Activated CD4-positive, alpha-beta T cell treated with anti-CD3 and anti-CD28 coated beads for 36 hours (primary cell): ENCODE measurements at regions of chr17 and their contacts with region 1.

Region 1: GRCh38 chr17:17206124-17206912 is at the start of gene PLD6:
- DNase-seq: peak; percentile 96
- ATAC-seq: peak; percentile 77
- H3K4me3 Mint-ChIP-seq: peak within 1 kb of the TSS; percentile 90
- H3K27ac Mint-ChIP-seq: peak within 1 kb of the TSS; percentile 97
- H3K4me1 Mint-ChIP-seq: peaks cover 25% of the 10 kb centered on the region
- H3K27me3 Mint-ChIP-seq: no peaks in the 10 kb centered on the region
- total RNA-seq, gene PLD6: 8.3 to 9.9 TPM

Region 2: GRCh38 chr17:17001874-17002520 is 204.3 kb before region 1 on chr17:
- CTCF ChIA-PET with region 1: no interaction called
- POLR2A ChIA-PET with region 1: no interaction called
- intact Hi-C with region 1: loop called in 1 of 2 experiments (anchors 1 kb)
- DNase-seq: peak; percentile 88
- ATAC-seq: peak; percentile 98
- H3K4me3 Mint-ChIP-seq: no peak overlapping the region
- H3K27ac Mint-ChIP-seq: no peak overlapping the region
- H3K4me1 Mint-ChIP-seq: no peaks in the 10 kb centered on the region
- H3K27me3 Mint-ChIP-seq: no peaks in the 10 kb centered on the region

Region 3: GRCh38 chr17:17119533-17119932 is 86.8 kb before region 1 on chr17:
- CTCF ChIA-PET with region 1: no interaction called
- POLR2A ChIA-PET with region 1: no interaction called
- intact Hi-C with region 1: loop called in 1 of 2 experiments (anchors 1 kb)
- DNase-seq: peak; percentile 82
- ATAC-seq: peak; percentile 92
- H3K4me3 Mint-ChIP-seq: no peak overlapping the region
- H3K27ac Mint-ChIP-seq: peak overlapping the region; percentile 87
- H3K4me1 Mint-ChIP-seq: peaks cover 80% of the 10 kb centered on the region
- H3K27me3 Mint-ChIP-seq: no peaks in the 10 kb centered on the region

Region 4: DNA sequence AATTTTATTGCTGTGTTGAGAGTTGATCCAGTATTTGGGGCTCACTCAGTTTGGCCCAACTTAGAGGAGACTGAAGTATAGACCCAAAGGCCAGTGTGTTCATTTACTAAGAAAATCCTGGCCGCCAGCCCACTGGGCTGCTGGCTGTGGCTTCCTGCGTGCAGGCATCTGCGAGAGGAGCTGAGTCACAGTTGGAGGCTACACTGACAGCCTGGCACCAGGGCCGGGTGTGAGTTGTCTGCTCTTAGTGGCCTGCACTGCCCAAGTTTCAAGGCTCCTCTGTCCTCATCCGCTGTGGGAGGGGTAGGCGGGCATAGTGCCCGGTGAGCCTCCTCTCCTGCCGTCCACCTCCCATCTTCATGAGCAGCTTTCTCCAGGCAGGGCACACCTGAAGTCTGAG is 54.4 kb before region 1 on chr17:
- CTCF ChIA-PET with region 1: no interaction called
- POLR2A ChIA-PET with region 1: no interaction called
- intact Hi-C with region 1: loop called (anchors 2 to 5 kb)
- DNase-seq: peak; percentile 69
- ATAC-seq: peak; percentile 48
- H3K4me3 Mint-ChIP-seq: no peak overlapping the region
- H3K27ac Mint-ChIP-seq: peak overlapping the region; percentile 75
- H3K4me1 Mint-ChIP-seq: peaks cover 62% of the 10 kb centered on the region
- H3K27me3 Mint-ChIP-seq: no peaks in the 10 kb centered on the region

Region 5: GRCh38 chr17:17171991-17172939 is 34.1 kb before region 1 on chr17:
- CTCF ChIA-PET with region 1: no interaction called
- POLR2A ChIA-PET with region 1: no interaction called
- intact Hi-C with region 1: no loop called
- DNase-seq: no peak
- ATAC-seq: no peak
- H3K4me3 Mint-ChIP-seq: no peak overlapping the region
- H3K27ac Mint-ChIP-seq: no peak overlapping the region
- H3K4me1 Mint-ChIP-seq: peaks cover 64% of the 10 kb centered on the region
- H3K27me3 Mint-ChIP-seq: no peaks in the 10 kb centered on the region

Region 6: DNA sequence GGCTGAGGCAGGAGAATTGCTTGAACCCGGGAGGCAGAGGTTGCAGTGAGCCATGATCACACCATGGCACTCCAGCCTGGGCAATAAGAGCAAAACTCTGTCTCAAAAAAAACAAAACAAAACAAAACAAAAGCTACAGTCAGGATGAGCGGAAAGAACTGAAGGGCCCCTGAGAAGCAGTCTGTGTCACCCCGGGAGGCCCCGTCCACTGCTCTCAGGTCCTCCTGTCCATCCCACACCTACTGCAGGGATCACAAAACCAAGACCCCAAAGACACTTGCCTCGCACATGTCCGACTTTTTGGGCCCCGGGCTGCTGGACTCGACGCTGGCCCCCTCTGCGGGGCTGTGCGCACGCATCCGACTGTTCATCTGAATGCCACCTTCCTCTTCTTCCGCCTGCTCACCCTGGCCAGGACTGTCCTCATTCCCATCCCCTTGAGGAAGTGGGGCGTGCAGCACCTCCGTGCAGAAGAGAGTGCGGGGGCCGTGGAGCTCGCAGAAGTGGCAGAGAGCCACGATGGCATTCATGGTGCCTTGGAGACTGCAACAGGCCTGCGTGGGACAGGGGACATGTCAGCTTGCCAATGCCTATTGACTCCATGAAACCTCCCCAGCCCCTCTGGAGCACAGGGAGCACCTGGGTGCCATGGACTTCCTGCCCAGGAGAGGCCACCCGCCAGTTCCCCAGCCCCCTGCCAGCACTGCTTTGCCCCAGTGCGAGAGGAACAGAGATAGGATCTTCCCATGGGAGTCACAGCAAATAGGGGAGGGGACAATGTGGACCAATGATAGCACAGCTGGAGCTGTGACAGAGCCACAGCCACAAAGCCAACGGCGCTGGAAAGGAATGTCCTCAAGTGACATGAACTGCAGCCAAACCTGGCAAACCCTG is 21.5 kb after region 1 on chr17:
- CTCF ChIA-PET with region 1: no interaction called
- POLR2A ChIA-PET with region 1: no interaction called
- intact Hi-C with region 1: no loop called
- DNase-seq: no peak
- ATAC-seq: no peak
- H3K4me3 Mint-ChIP-seq: no peak overlapping the region
- H3K27ac Mint-ChIP-seq: no peak overlapping the region
- H3K4me1 Mint-ChIP-seq: no peaks in the 10 kb centered on the region
- H3K27me3 Mint-ChIP-seq: no peaks in the 10 kb centered on the region

Region 7: GRCh38 chr17:17280613-17281549 is 74.6 kb after region 1 on chr17 and contains the start of gene COPS3:
- CTCF ChIA-PET with region 1: no interaction called
- POLR2A ChIA-PET with region 1: no interaction called
- intact Hi-C with region 1: loop called (anchors 1 to 2 kb)
- DNase-seq: peak; percentile 99
- ATAC-seq: peak; percentile 94
- H3K4me3 Mint-ChIP-seq: peak within 1 kb of the TSS; percentile 92
- H3K27ac Mint-ChIP-seq: peak within 1 kb of the TSS; percentile 95
- H3K4me1 Mint-ChIP-seq: peaks cover 41% of the 10 kb centered on the region
- H3K27me3 Mint-ChIP-seq: no peaks in the 10 kb centered on the region
- total RNA-seq, gene COPS3: 79.6 to 83.1 TPM

Region 8: DNA sequence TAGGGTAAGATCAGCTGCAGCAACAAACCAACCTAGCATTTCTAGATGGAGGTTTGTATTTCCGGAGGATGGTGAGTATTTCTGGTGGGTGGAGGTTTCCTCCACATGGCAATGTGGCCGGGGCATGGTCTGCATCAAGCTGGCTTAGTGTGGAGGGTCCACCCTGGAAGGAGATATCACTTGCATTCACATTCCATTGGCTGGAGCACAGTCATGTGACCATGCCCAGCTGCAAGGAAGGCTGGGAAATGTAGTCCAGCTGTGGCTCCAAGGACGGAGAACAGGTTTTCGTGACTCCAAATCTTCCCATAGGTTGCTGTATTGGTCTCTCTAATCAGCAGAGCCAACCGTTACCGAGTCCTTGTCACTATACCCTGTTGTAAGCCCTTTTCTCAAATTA is 543.6 kb after region 1 on chr17:
- CTCF ChIA-PET with region 1: no interaction called
- POLR2A ChIA-PET with region 1: no interaction called
- intact Hi-C with region 1: no loop called
- DNase-seq: peak; percentile 76
- ATAC-seq: peak; percentile 15
- H3K4me3 Mint-ChIP-seq: no peak overlapping the region
- H3K27ac Mint-ChIP-seq: peak overlapping the region; percentile 83
- H3K4me1 Mint-ChIP-seq: peaks cover 52% of the 10 kb centered on the region
- H3K27me3 Mint-ChIP-seq: no peaks in the 10 kb centered on the region